Panc1 (cell line): ENCODE measurements at regions of chr11 and their contacts with region 1.

Region 1: GRCh38 chr11:114036156-114036811 is 23.2 kb upstream of the ZBTB16 start:
- DNase-seq: no peak
- ATAC-seq: peak; percentile 94
- H3K4me3 ChIP-seq: peak overlapping the region; percentile 26 to 52
- H3K27ac ChIP-seq: no peak overlapping the region
- H3K4me1 ChIP-seq: peaks cover 10% of the 10 kb centered on the region
- H3K27me3 ChIP-seq: peaks cover 9% of the 10 kb centered on the region
- CTCF ChIP-seq: peak; percentile 97

Region 2: GRCh38 chr11:113928311-113928710 is 108.0 kb before region 1 on chr11:
- CTCF ChIA-PET with region 1: no interaction called
- POLR2A ChIA-PET with region 1: no interaction called
- in situ Hi-C with region 1: no loop called
- intact Hi-C with region 1: no loop called
- DNase-seq: no peak
- ATAC-seq: no peak
- H3K4me3 ChIP-seq: no peak overlapping the region
- H3K27ac ChIP-seq: no peak overlapping the region
- H3K4me1 ChIP-seq: no peaks in the 10 kb centered on the region
- H3K27me3 ChIP-seq: peaks cover 7% of the 10 kb centered on the region
- CTCF ChIP-seq: no peak

Region 3: GRCh38 chr11:114121804-114122504 is 85.7 kb after region 1 on chr11:
- CTCF ChIA-PET with region 1: no interaction called
- POLR2A ChIA-PET with region 1: no interaction called
- in situ Hi-C with region 1: no loop called
- intact Hi-C with region 1: no loop called
- DNase-seq: no peak
- ATAC-seq: no peak
- H3K4me3 ChIP-seq: no peak overlapping the region
- H3K27ac ChIP-seq: no peak overlapping the region
- H3K4me1 ChIP-seq: no peaks in the 10 kb centered on the region
- H3K27me3 ChIP-seq: peaks cover 29% of the 10 kb centered on the region
- CTCF ChIP-seq: no peak

Region 4: GRCh38 chr11:114180301-114181055 is 144.2 kb after region 1 on chr11:
- CTCF ChIA-PET with region 1: no interaction called
- POLR2A ChIA-PET with region 1: no interaction called
- in situ Hi-C with region 1: no loop called
- intact Hi-C with region 1: loop called (anchors 5 kb)
- DNase-seq: no peak
- ATAC-seq: peak; percentile 80
- H3K4me3 ChIP-seq: no peak overlapping the region
- H3K27ac ChIP-seq: no peak overlapping the region
- H3K4me1 ChIP-seq: no peaks in the 10 kb centered on the region
- H3K27me3 ChIP-seq: peaks cover 21% of the 10 kb centered on the region
- CTCF ChIP-seq: peak; percentile 64

Region 5: GRCh38 chr11:114738954-114739353 is 702.7 kb after region 1 on chr11:
- CTCF ChIA-PET with region 1: no interaction called
- POLR2A ChIA-PET with region 1: no interaction called
- in situ Hi-C with region 1: no loop called
- intact Hi-C with region 1: no loop called
- DNase-seq: peak; percentile 27
- ATAC-seq: peak; percentile 70; the same call in 1 of the 2 replicates
- H3K4me3 ChIP-seq: no peak overlapping the region
- H3K27ac ChIP-seq: no peak overlapping the region
- H3K4me1 ChIP-seq: no peaks in the 10 kb centered on the region
- H3K27me3 ChIP-seq: no peaks in the 10 kb centered on the region
- CTCF ChIP-seq: peak; percentile 81